A549 (cell line): ENCODE measurements at regions of chr15 and their contacts with region 1.

Region 1: GRCh38 chr15:43225201-43225949 is 4.6 kb upstream of the EPB42 start:
- DNase-seq: peak; percentile 42 to 52
- ATAC-seq: peak; percentile 98 to 100
- H3K4me3 ChIP-seq: no peak overlapping the region
- H3K27ac ChIP-seq: no peak overlapping the region
- H3K4me1 ChIP-seq: no peaks in the 10 kb centered on the region
- CTCF ChIP-seq: peak; percentile 56
- EP300 ChIP-seq: no peak
- POLR2A ChIP-seq: no peak
- RAD21 ChIP-seq: peak; percentile 56 to 65

Region 2: DNA sequence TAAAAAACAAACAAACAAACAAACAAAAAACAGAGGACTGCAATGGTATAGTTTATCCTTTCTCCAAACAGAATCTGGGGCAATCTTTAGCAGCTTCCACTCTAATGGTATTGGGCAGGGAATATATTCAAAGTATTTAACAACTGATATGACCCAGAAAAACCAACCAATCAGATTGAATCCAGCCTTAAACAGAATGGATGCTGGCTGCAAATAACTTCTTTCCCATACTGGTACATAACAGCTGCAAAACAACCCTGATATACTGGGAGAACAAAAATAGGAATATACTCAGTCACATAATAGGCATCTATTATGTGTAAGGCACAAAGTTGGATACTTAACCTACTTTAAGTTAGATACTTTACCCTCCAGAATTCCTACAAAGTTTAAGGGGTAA is 168.7 kb before region 1 on chr15:
- CTCF ChIA-PET with region 1: no interaction called
- POLR2A ChIA-PET with region 1: no interaction called
- DNase-seq: no peak
- ATAC-seq: no peak
- H3K4me3 ChIP-seq: no peak overlapping the region
- H3K27ac ChIP-seq: no peak overlapping the region
- H3K4me1 ChIP-seq: no peaks in the 10 kb centered on the region
- CTCF ChIP-seq: no peak
- EP300 ChIP-seq: no peak
- POLR2A ChIP-seq: no peak
- RAD21 ChIP-seq: no peak

Region 3: DNA sequence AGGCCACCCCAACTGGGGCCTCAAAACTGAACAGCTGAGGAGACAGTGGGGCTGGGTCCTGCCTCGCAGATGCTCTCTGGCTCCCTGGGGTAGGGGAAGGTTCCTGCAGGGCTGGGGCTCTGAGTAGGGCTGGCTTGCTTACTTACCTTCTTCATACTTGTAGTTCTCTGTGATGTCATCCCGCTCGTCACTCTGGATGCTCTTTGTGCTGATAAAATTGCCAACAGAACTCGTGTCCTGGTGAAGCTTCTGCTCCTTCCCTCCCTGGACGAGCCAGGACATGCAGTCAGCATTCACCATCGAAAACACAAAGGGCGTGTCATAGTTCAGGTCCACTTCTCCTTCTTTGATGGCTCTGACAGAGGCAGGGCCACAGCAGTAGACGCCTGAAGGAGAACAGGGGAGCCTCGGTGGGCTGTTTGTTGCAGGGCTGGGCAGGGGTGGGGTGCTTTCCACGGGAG is 13.3 kb after region 1 on chr15:
- CTCF ChIA-PET with region 1: interaction called, 13 read pairs
- POLR2A ChIA-PET with region 1: no interaction called
- DNase-seq: no peak
- ATAC-seq: no peak
- H3K4me3 ChIP-seq: no peak overlapping the region
- H3K27ac ChIP-seq: no peak overlapping the region
- H3K4me1 ChIP-seq: no peaks in the 10 kb centered on the region
- CTCF ChIP-seq: no peak
- EP300 ChIP-seq: no peak
- POLR2A ChIP-seq: no peak
- RAD21 ChIP-seq: no peak

Region 4: GRCh38 chr15:43249699-43250203 is 24.4 kb after region 1 on chr15:
- CTCF ChIA-PET with region 1: interaction called, 17 read pairs
- POLR2A ChIA-PET with region 1: no interaction called
- DNase-seq: no peak
- ATAC-seq: no peak
- H3K4me3 ChIP-seq: no peak overlapping the region
- H3K27ac ChIP-seq: no peak overlapping the region
- H3K4me1 ChIP-seq: no peaks in the 10 kb centered on the region
- CTCF ChIP-seq: no peak
- EP300 ChIP-seq: no peak
- POLR2A ChIP-seq: no peak
- RAD21 ChIP-seq: no peak

Region 5: DNA sequence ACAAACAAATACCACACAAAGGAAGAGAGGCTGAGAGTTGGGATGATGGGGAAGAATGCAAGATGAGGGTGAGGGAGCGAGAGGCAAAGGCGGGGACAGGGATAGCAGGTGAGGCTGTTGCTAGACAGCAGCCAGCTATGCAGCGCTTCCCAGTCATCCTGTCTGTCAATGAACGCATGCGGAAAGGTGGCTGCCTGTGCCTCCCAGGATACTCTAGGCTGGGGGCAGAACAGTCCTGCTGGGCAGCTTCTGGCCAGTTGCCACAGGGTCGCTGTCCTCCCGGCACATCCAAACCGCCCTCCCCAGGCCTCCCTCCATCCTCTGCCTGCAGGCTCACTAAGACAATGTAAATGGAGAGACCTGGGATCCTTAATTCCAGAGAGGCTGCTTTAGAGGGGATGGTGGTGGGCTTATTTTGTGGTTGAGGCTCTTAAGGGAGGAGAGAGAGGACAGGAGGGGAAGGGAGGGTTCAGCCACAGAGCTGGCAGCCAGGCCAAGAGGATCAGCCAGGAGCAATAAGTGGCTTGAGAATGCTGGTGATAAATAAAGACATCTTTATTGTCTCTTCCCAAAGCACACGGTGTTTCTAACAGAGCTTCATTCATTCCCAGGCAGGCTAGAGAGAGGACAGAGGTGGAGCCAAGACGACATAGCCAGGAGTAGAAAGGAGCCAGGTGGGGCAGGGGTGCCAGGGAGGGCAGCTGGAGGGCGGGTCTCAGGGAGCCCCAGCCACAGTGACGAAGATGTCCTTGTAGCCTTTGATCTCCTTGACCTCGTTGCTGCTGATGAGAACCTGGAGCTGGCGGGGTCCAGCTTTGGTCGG is 50.6 kb after region 1 on chr15:
- CTCF ChIA-PET with region 1: interaction called, 11 read pairs
- POLR2A ChIA-PET with region 1: no interaction called
- DNase-seq: no peak
- ATAC-seq: no peak; a peak in 1 of 6 replicates
- H3K4me3 ChIP-seq: no peak overlapping the region
- H3K27ac ChIP-seq: no peak overlapping the region
- H3K4me1 ChIP-seq: no peaks in the 10 kb centered on the region
- CTCF ChIP-seq: no peak
- EP300 ChIP-seq: no peak
- POLR2A ChIP-seq: no peak
- RAD21 ChIP-seq: no peak